Posterior cingulate gyrus (tissue), 11 donors: ENCODE measurements at regions of chr22 and their contacts with region 1.

Region 1: GRCh38 chr22:20156611-20157429 is 6.0 kb upstream of the CCDC188 start:
- DNase-seq: peak; percentile 78 to 99 (median 94)

Region 2: DNA sequence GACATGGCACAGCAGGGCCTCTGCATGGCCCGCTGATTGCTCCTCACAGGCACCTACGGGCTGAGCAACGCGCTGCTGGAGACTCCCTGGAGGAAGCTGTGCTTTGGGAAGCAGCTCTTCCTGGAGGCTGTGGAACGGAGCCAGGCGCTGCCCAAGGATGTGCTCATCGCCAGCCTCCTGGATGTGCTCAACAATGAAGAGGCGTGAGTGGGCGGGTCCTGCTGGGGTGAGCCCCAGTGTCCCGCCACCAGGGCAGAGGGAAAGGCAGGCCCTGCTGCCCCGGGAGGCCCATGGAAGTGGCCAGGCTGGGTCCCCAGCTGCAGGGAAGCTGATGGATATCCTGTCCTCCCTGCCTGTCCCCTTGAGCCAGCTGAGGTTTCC is 95.3 kb before region 1 on chr22:
- intact Hi-C with region 1: no loop called
- DNase-seq: peak in 7 of 10 donors; percentile 29 to 91 (median 56)

Region 3: GRCh38 chr22:20238536-20238900 is 81.7 kb after region 1 on chr22:
- intact Hi-C with region 1: no loop called
- DNase-seq: peak in 3 of 10 donors; percentile 59 to 91 (median 88)

Region 4: GRCh38 chr22:20268279-20269012 is 111.6 kb after region 1 on chr22 and contains the start of gene RTN4R:
- intact Hi-C with region 1: loop called (anchors 2 kb)
- DNase-seq: peak in 5 of 10 donors; percentile 58 to 92 (median 69)

Region 5: DNA sequence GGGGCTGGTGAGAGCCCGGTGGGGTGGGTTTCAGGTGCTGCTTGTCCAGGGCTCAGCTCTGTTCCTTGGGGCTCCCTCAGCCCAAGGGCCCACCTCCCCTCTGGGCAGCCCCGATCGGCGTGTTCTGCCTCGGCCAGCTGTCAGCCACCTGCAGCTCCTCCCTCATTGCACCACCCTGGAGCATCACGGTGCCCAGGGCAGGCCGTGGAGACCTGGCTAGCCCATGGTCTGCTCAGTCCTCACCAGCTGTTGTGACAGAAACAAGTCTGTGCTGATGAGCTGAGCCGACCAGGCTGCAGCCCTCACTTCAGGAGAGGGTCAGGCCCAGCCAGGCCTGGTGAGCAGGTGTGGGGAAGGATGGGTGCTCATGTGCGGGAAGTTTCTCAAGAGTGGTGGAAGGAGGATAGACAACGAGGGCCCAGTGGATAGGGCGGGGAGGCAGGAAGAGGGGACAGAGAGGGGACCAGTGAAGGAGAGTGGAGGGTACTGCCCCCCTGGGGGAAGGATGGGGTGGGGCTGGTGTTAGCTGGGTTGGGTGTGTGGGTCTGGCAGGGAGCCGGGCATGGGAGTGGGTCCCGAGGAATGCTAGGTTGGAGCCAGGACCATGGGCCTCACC is 127.8 kb after region 1 on chr22:
- intact Hi-C with region 1: loop called (anchors 1 kb)
- DNase-seq: no peak